ENCODE measurements at regions of chr6 and their contacts with region 1.

Region 1: GRCh38 chr6:35342258-35343091 is at the start of gene PPARD:
- DNase-seq: peak; percentile 98
- ATAC-seq: peak; percentile 98
- H3K4me3 Mint-ChIP-seq: peak within 1 kb of the TSS; percentile 82
- H3K27ac Mint-ChIP-seq: peak within 1 kb of the TSS; percentile 91
- H3K4me1 Mint-ChIP-seq: peaks cover 40% of the 10 kb centered on the region
- H3K27me3 Mint-ChIP-seq: no peaks in the 10 kb centered on the region
- CTCF ChIP-seq: peak; percentile 95
- total RNA-seq, gene PPARD: 26.6 to 26.7 TPM

Region 2: GRCh38 chr6:35311390-35312075 is 30.9 kb before region 1 on chr6:
- CTCF ChIA-PET with region 1: interaction called, 19 read pairs
- POLR2A ChIA-PET with region 1: no interaction called
- intact Hi-C with region 1: no loop called
- DNase-seq: peak; percentile 64
- ATAC-seq: peak; percentile 70
- H3K4me3 Mint-ChIP-seq: peak overlapping the region; percentile 57
- H3K27ac Mint-ChIP-seq: peak overlapping the region; percentile 96
- H3K4me1 Mint-ChIP-seq: peaks cover 87% of the 10 kb centered on the region
- H3K27me3 Mint-ChIP-seq: no peaks in the 10 kb centered on the region
- CTCF ChIP-seq: no peak

Region 3: GRCh38 chr6:35318196-35319171 is 24.0 kb before region 1 on chr6:
- CTCF ChIA-PET with region 1: interaction called, 10 read pairs
- POLR2A ChIA-PET with region 1: interaction called, 3 read pairs
- intact Hi-C with region 1: no loop called
- DNase-seq: no peak
- ATAC-seq: no peak
- H3K4me3 Mint-ChIP-seq: no peak overlapping the region
- H3K27ac Mint-ChIP-seq: no peak overlapping the region
- H3K4me1 Mint-ChIP-seq: peaks cover 35% of the 10 kb centered on the region
- H3K27me3 Mint-ChIP-seq: no peaks in the 10 kb centered on the region
- CTCF ChIP-seq: no peak

Region 4: DNA sequence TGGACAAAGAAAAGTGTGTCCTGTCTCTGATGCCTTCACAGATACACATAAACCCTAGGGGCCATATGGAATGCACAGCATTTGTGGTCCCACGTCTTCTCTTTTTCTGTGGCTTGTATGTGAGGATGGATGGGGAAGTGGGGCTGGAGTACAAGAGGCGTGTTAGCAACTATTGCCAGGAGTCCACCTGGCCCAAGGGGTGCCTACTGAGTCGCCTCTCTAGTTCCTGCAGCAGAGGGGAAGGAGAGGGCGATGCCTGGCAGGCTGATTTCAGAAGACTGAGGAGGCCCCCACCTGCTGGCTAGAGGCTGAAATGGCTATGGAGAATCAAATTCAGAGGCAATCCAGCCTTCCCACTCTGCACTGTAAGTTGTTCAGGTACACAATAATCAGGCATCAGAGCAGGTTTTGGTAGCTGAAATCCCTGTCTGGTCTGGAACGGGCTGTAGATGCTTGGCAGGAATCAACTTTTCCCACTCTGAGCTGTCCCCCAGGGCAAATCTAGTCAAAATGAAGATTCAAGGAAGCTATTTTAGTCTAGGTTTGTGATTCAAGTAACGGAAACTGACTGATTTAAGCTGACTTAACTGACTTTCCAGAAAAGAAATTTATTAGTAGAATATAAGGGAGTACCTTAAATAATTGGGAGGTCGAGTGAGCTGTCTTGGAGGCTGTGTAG is 15.0 kb before region 1 on chr6:
- CTCF ChIA-PET with region 1: interaction called, 17 read pairs
- POLR2A ChIA-PET with region 1: no interaction called
- intact Hi-C with region 1: no loop called
- DNase-seq: peak; percentile 88
- ATAC-seq: peak; percentile 95
- H3K4me3 Mint-ChIP-seq: no peak overlapping the region
- H3K27ac Mint-ChIP-seq: peak overlapping the region; percentile 68
- H3K4me1 Mint-ChIP-seq: peaks cover 18% of the 10 kb centered on the region
- H3K27me3 Mint-ChIP-seq: no peaks in the 10 kb centered on the region
- CTCF ChIP-seq: peak; percentile 76

Region 5: DNA sequence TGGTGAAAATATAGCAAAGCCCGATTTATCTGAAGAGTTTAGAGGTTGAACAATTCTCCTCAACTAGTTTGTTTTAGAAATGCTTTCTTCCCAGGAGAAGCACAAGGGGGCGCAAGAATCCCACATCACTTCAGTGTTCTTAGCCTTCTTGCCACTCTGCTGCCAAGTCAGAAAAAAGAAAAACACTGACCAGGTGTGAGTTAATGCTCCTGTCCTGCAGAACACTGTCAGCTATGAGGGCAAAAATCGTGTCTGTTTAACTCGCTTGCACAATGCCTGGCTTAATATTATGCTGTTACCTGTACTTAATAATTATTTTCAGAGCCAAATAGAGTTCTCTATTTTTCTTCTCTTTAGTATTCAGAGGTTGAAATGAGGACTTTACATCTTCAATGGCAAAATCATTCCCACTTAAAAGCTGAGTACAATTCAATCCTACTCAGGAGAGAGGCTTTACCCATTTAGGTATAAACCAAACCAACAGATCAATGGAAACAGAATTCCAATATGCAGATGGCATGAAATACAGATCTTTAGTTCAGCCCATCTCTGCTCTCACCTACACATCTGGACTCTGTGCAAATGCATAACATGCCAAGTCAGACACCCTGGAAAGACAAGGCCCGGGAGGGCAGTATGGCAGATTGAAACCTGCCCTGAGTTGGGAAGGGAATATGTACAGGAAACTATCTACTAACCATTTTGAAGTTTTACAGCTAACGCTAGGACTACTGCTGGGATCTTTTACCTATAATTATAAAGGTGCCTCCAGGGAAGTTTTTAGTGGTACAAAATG is 241.6 kb after region 1 on chr6:
- CTCF ChIA-PET with region 1: no interaction called
- POLR2A ChIA-PET with region 1: no interaction called
- intact Hi-C with region 1: no loop called
- DNase-seq: peak; percentile 87
- ATAC-seq: peak; percentile 71
- H3K4me3 Mint-ChIP-seq: no peak overlapping the region
- H3K27ac Mint-ChIP-seq: no peak overlapping the region
- H3K4me1 Mint-ChIP-seq: peaks cover 53% of the 10 kb centered on the region
- H3K27me3 Mint-ChIP-seq: no peaks in the 10 kb centered on the region
- CTCF ChIP-seq: peak; percentile 91

Measured in activated CD8-positive, alpha-beta T cell treated with anti-CD3 and anti-CD28 coated beads for 36 hours (primary cell).